Activated CD4-positive, alpha-beta T cell treated with anti-CD3 and anti-CD28 coated beads, Interleukin-2, amount 10 ng/mL, durations not matched to agents 7 days and 5 days (primary cell): ENCODE measurements at regions of chr13 and their contacts with region 1.

Region 1: DNA sequence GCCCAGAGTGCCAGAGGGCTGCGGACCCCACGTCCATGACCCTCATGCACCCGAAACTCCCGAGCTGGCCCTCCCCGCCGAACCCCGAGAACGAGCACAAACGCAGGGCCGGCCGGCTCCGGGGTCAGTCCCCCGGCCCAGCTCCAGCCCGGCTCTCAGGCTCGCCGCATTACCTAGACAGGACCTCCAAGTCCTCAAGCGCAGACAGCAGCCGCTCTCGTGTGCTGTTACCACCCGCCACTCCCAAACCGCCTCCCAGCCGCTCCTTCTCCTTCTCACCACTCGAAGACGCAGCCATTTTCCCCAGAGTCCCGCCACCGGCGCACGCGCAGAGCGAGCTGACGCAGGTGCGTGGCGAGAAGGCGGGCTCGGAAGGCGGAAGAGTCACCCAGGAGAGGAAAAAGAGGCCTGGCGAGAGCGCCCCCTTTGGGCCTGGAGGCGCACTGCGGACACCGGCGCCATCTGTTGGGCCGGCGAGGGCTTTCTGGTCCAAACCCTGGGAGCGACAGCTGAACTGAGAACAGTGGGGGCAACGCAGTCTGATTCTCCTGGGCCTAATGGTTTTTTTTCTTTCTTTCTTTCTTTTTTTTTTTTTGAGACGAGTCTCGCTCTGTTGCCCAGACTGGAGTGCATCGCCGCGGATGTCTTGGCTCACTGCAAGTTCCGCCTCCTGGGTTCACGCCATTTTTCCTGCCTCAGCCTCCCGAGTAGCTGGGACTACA is at the start of gene MED4:
- DNase-seq: peak; percentile 97
- H3K4me3 Mint-ChIP-seq: peak within 1 kb of the TSS; percentile 96
- H3K27ac Mint-ChIP-seq: peak within 1 kb of the TSS; percentile 93
- H3K4me1 Mint-ChIP-seq: peaks cover 37% of the 10 kb centered on the region
- H3K27me3 Mint-ChIP-seq: peaks cover 3% of the 10 kb centered on the region
- total RNA-seq, gene MED4: 63.1 to 72.2 TPM

Region 2: GRCh38 chr13:48037346-48038173 is 57.4 kb before region 1 on chr13 and contains the start of gene NUDT15:
- CTCF ChIA-PET with region 1: interaction called, 34 read pairs
- POLR2A ChIA-PET with region 1: no interaction called
- DNase-seq: peak; percentile 97
- H3K4me3 Mint-ChIP-seq: peak within 1 kb of the TSS; percentile 90
- H3K27ac Mint-ChIP-seq: peak within 1 kb of the TSS; percentile 94
- H3K4me1 Mint-ChIP-seq: peaks cover 46% of the 10 kb centered on the region
- H3K27me3 Mint-ChIP-seq: no peaks in the 10 kb centered on the region
- total RNA-seq, gene NUDT15: 10.1 to 12.0 TPM

Region 3: GRCh38 chr13:48043789-48044503 is 51.0 kb before region 1 on chr13:
- CTCF ChIA-PET with region 1: interaction called, 34 read pairs
- POLR2A ChIA-PET with region 1: no interaction called
- DNase-seq: no peak
- H3K4me3 Mint-ChIP-seq: peak overlapping the region; percentile 10
- H3K27ac Mint-ChIP-seq: peak overlapping the region; percentile 88
- H3K4me1 Mint-ChIP-seq: peaks cover 39% of the 10 kb centered on the region
- H3K27me3 Mint-ChIP-seq: no peaks in the 10 kb centered on the region

Region 4: GRCh38 chr13:48078251-48078656 is 16.7 kb before region 1 on chr13:
- CTCF ChIA-PET with region 1: interaction called, 11 read pairs
- POLR2A ChIA-PET with region 1: no interaction called
- DNase-seq: peak; percentile 54
- H3K4me3 Mint-ChIP-seq: no peak overlapping the region
- H3K27ac Mint-ChIP-seq: no peak overlapping the region
- H3K4me1 Mint-ChIP-seq: peaks cover 12% of the 10 kb centered on the region
- H3K27me3 Mint-ChIP-seq: no peaks in the 10 kb centered on the region

Region 5: DNA sequence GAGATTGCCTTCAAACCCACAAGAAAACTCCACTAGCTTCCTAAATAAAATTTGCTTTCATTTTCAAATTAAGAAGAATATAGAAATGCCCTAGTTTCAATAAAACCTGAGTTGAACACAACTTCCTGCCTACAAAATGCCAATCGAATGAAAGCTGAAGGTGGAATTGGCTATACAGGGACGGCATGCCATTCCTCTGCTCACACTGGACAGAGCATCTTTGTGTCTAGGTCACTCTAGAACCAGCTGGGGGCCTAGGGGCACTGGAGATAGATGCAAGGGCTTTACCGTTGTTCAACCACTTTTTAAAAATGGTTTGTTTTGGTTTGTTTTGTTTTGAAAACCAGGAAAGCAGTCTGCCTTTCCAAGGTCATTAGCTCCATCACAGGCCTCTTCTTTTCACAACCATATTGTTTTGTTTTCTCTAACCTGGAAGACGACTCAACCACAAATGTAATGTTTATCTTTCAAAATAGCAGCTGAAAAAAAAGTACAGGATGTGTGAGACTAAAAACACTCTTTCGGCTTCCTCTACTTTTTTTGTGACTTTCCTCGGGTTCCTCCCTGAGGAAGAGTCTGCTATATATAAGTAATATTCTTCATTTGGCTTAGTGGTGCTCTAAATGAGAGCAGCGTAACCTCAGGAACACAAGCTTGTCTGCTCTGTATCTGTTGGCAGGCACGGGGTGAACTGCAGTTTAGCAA is 126.2 kb after region 1 on chr13:
- CTCF ChIA-PET with region 1: interaction called, 10 read pairs
- POLR2A ChIA-PET with region 1: no interaction called
- DNase-seq: no peak
- H3K4me3 Mint-ChIP-seq: peak overlapping the region; percentile 71
- H3K27ac Mint-ChIP-seq: peak overlapping the region; percentile 97
- H3K4me1 Mint-ChIP-seq: peaks cover 48% of the 10 kb centered on the region
- H3K27me3 Mint-ChIP-seq: peaks cover 4% of the 10 kb centered on the region

Region 6: DNA sequence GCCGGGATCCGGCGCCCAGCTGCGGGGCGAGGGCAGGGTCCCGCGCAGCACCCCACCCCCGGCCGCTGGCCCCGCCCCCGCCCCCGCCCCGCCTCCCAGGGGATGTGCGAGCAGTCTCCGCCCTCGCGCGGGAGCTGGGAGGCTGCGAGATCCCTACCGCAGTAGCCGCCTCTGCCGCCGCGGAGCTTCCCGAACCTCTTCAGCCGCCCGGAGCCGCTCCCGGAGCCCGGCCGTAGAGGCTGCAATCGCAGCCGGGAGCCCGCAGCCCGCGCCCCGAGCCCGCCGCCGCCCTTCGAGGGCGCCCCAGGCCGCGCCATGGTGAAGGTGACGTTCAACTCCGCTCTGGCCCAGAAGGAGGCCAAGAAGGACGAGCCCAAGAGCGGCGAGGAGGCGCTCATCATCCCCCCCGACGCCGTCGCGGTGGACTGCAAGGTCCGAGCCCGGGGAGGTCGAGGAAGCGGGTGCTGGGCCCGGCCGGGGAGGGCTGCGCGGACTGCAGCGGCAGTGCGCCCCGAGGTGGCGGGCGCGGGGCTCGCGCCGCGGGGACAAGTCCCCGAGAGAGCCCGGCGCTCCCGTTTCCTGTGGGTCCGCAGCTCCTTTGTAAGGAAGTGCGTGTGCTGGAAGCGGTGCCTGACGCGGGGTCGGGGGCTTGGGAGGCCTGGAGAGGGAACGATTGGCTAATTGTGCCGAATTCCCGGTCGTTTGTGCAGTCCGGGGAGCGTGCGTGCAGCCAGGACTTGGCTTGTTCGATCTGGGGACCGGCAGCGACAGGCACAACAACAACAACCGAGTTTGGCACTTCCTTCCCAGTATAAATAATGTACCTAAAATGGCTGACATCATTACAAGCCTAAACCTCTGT is 138.3 kb after region 1 on chr13 and contains the start of gene ITM2B:
- CTCF ChIA-PET with region 1: interaction called, 12 read pairs
- POLR2A ChIA-PET with region 1: no interaction called
- DNase-seq: peak; percentile 62
- H3K4me3 Mint-ChIP-seq: peak within 1 kb of the TSS; percentile 93
- H3K27ac Mint-ChIP-seq: peak within 1 kb of the TSS; percentile 97
- H3K4me1 Mint-ChIP-seq: peaks cover 41% of the 10 kb centered on the region
- H3K27me3 Mint-ChIP-seq: peaks cover 18% of the 10 kb centered on the region
- total RNA-seq, gene ITM2B: 259 to 317 TPM